ENCODE measurements at regions of chr12 and their contacts with region 1.

Region 1: DNA sequence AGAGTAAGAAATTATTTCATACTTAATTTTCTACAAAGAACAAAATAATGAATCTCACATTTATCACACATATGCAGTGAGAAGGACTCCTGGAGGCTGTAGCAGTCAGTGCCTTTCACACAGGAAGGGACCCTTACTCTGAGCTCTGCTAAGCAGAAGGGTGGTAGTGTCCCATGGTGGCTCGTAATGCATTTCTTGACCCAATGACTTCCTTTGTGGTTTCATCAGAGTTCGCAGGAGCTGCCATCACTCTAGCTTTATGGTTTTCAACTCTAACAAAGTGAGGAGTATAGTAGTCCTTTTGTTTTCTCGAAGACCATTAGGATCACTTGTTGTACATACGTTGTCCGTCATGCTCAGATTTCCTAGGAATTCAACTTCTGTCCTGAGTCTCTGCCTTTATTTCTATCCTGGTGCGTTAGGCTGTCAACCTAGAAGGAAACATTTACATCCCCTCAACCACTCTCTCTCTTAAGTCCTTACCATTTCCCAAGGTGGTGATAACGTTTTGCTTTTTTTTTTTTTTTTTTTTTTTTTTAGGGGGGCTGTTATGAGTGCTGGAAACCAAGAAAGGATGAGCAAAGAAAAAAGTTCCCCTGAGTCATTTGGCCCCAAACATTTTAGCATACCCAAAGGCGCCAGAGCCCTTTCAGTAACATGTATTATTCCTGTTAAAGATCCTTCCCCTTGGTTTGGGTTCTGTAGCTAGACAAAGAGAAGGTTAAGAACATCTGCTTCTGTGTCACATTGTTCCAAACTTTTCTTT is 37.2 kb downstream of the GABARAPL1 start:
- DNase-seq: no peak
- ATAC-seq: no peak
- H3K4me3 ChIP-seq: no peak overlapping the region
- H3K27ac ChIP-seq: no peak overlapping the region
- H3K4me1 ChIP-seq: no peaks in the 10 kb centered on the region
- H3K27me3 ChIP-seq: no peaks in the 10 kb centered on the region
- CTCF ChIP-seq: no peak
- POLR2A ChIP-seq: no peak
- RAD21 ChIP-seq: no peak

Region 2: DNA sequence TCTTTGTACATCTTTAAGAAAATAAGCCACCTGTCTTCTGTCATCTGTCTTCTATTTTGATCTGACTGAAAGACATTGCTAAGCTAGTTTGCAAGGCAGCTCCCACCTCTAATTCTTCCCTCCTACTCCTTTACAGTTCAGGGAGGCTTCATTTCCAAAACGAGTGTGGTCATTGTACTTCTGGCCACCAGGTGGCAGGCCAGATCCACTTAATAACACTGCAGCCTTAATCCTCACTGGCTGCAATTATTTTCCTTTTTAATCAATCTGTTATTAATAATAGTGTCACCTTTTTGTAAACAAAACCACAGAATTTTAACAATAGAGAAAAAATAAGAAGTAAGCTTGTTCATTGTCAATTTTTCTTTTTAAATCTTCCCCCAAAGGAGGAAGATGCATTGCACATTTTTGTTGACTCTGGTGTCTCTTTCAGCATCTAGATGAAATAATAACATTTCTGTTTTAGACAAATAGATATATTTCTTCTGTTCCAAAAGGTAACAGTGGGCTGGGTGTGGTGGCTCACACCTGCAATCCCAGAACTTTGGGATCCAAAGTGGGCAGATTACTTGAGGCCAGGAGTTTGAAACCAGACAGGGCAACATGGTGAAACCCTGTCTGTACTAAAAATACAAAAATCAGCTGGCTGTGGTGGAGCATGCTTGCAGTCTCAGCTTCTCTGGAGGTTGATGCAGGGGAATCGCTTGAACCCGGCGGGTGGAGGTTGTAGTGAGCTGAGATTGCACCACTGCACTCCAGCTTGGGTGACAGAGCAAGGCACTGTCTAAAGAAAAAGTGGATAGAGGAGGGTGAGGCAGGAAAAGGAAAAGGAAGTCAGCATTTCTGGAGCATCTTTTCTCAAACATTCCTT is 13.9 kb before region 1 on chr12:
- CTCF ChIA-PET with region 1: no interaction called
- POLR2A ChIA-PET with region 1: no interaction called
- dilution Hi-C with region 1: no loop called
- in situ Hi-C with region 1: no loop called
- intact Hi-C with region 1: no loop called
- DNase-seq: peak; percentile 44
- ATAC-seq: peak; percentile 87
- H3K4me3 ChIP-seq: no peak overlapping the region
- H3K27ac ChIP-seq: no peak overlapping the region
- H3K4me1 ChIP-seq: peaks cover 1% of the 10 kb centered on the region; the same call in 1 of the 2 replicates
- H3K27me3 ChIP-seq: no peaks in the 10 kb centered on the region; the same call in 1 of the 2 replicates
- CTCF ChIP-seq: peak; percentile 79
- POLR2A ChIP-seq: no peak
- RAD21 ChIP-seq: peak; percentile 84

Region 3: GRCh38 chr12:10285919-10286318 is 36.0 kb after region 1 on chr12:
- CTCF ChIA-PET with region 1: no interaction called
- POLR2A ChIA-PET with region 1: no interaction called
- dilution Hi-C with region 1: no loop called
- in situ Hi-C with region 1: no loop called
- intact Hi-C with region 1: loop called (anchors 5 kb)
- DNase-seq: no peak
- ATAC-seq: no peak
- H3K4me3 ChIP-seq: no peak overlapping the region
- H3K27ac ChIP-seq: no peak overlapping the region
- H3K4me1 ChIP-seq: no peaks in the 10 kb centered on the region
- H3K27me3 ChIP-seq: peaks cover 8% of the 10 kb centered on the region; the same call in 1 of the 2 replicates
- CTCF ChIP-seq: no peak
- POLR2A ChIP-seq: no peak
- RAD21 ChIP-seq: no peak

Region 4: DNA sequence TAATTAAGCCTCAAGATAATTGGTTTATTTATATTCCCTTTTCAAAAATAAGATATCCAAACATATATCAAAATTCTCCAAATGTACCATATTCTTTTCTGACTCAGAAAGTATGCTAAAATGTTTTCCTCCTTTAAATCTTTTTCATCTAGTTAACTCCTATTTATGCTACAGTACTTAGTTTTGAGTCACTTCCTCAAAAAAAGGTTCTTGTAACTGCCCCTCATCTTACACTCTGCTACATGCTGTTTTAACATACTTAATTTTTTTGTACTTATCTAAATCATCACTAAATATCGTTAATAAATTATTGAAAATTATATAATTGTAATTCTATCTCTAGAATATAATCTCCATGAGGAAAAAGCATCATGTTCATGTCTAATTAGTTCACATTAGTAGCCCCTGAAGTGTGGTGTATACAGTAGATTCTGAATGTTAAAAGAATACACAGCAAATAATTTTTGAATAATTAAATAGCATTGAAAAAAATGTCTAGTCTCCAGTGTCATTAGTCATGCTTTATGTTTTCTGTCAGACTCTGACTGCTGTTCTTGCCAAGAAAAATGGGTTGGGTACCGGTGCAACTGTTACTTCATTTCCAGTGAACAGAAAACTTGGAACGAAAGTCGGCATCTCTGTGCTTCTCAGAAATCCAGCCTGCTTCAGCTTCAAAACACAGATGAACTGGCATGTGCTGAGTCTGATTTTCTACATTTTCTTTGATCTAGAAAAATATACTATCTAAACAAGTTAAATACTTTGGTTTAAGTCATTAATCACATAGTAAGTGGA is 61.2 kb after region 1 on chr12:
- CTCF ChIA-PET with region 1: no interaction called
- POLR2A ChIA-PET with region 1: no interaction called
- dilution Hi-C with region 1: no loop called
- in situ Hi-C with region 1: no loop called
- intact Hi-C with region 1: no loop called
- DNase-seq: no peak
- ATAC-seq: no peak
- H3K4me3 ChIP-seq: no peak overlapping the region
- H3K27ac ChIP-seq: no peak overlapping the region
- H3K4me1 ChIP-seq: no peaks in the 10 kb centered on the region
- H3K27me3 ChIP-seq: peaks cover 20% of the 10 kb centered on the region
- CTCF ChIP-seq: no peak
- POLR2A ChIP-seq: no peak
- RAD21 ChIP-seq: no peak